CD4-positive, alpha-beta T cell (primary cell): ENCODE measurements at regions of chr2 and their contacts with region 1.

Region 1: DNA sequence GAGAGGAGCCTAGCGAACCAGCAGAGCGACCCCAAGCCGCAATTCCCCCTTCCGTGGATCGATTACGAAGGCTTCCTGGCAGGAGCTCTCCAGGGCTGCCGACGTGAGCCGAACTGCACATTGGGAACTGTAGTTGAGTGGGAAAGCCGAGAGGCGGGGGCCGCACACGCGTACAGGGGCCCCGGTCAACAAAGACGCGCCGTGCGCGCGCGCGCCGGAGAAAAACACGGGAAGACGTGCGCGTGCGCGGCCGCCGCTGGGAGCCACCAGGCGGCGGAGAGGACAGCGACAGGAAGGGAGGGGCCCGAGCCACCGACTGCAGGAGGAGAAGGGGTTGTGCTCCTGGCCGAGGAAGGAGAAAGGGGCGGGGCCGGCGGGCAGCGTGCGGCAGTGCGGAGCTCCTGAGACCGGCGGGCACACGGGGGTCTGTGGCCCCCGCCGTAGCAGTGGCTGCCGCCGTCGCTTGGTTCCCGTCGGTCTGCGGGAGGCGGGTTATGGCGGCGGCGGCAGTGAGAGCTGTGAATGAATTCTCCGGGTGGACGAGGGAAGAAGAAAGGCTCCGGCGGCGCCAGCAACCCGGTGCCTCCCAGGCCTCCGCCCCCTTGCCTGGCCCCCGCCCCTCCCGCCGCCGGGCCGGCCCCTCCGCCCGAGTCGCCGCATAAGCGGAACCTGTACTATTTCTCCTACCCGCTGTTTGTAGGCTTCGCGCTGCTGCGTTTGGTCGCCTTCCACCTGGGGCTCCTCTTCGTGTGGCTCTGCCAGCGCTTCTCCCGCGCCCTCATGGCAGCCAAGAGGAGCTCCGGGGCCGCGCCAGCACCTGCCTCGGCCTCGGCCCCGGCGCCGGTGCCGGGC is at the start of gene SPAST:
- DNase-seq: peak; percentile 91 to 98 (median 96)
- ATAC-seq: peak; percentile 87
- H3K4me3 ChIP-seq: peak within 1 kb of the TSS; percentile 90
- H3K4me3 Mint-ChIP-seq: peak within 1 kb of the TSS; percentile 97
- H3K27ac ChIP-seq: peak within 1 kb of the TSS; percentile 66 to 80
- H3K27ac Mint-ChIP-seq: peak within 1 kb of the TSS; percentile 90
- H3K4me1 ChIP-seq: peaks cover 35% of the 10 kb centered on the region
- H3K4me1 Mint-ChIP-seq: peaks cover 39% of the 10 kb centered on the region
- H3K27me3 ChIP-seq: no peaks in the 10 kb centered on the region
- H3K27me3 Mint-ChIP-seq: no peaks in the 10 kb centered on the region
- CTCF ChIP-seq: peak; percentile 64
- total RNA-seq, gene SPAST: 7.0 to 7.4 TPM

Region 2: GRCh38 chr2:31233741-31234682 is 829.5 kb before region 1 on chr2 and contains the start of gene EHD3:
- CTCF ChIA-PET with region 1: no interaction called
- POLR2A ChIA-PET with region 1: no interaction called
- intact Hi-C with region 1: loop called in 1 of 2 experiments (anchors 10 kb)
- DNase-seq: peak; percentile 51 to 85 (median 71)
- ATAC-seq: peak; percentile 97
- H3K4me3 ChIP-seq: peak within 1 kb of the TSS; percentile 73
- H3K4me3 Mint-ChIP-seq: peak within 1 kb of the TSS; percentile 86
- H3K27ac ChIP-seq: no peak within 1 kb of the TSS
- H3K27ac Mint-ChIP-seq: peak within 1 kb of the TSS; percentile 78
- H3K4me1 ChIP-seq: peaks cover 20% of the 10 kb centered on the region
- H3K4me1 Mint-ChIP-seq: peaks cover 31% of the 10 kb centered on the region
- H3K27me3 ChIP-seq: no peaks in the 10 kb centered on the region
- H3K27me3 Mint-ChIP-seq: peaks cover 9% of the 10 kb centered on the region
- CTCF ChIP-seq: no peak
- total RNA-seq, gene EHD3: 1.4 to 1.7 TPM

Region 3: DNA sequence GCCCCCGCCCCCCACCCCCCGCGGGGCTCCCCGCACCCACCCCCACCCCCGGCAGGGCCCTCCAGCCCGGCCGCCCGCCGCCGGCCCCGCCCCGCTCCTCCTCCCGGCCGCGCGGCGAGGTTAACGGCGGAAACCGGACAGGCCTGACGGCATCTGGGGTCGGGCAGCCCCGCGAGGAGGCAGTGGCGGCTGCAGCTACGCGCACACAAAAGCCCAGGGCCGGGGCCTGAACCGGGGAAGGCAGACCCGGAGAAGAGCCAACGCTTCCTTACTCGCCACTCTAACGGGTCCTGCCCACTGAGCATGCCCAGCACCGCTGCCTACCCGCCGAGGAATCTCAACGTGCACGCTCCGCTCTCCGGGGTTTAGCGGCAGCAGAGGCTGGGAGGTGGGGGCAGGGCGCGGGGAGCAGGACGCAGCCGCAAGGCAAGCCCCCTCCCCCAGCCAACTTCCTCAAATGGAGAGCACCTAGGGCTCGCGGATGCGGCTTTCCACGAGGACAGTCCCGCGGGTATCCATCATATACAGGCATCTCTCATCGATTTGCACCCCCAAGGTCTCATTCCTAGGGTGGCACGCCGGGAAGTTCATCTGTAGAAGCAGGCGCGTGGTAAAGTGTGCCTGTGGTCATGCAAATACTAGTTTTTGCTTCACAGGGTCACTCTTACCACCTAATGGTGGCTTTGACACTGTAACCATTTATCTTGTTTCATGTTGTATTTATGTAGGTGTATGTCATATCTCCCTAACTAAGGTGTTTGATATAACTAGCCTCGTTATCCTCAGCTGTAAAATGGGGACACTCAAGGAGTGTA is 52.7 kb before region 1 on chr2 and contains the start of gene MEMO1:
- CTCF ChIA-PET with region 1: interaction called, 3 read pairs
- POLR2A ChIA-PET with region 1: interaction called, 25 read pairs
- intact Hi-C with region 1: loop called (anchors 1 to 2 kb)
- DNase-seq: peak; percentile 82 to 96 (median 91)
- ATAC-seq: peak; percentile 83
- H3K4me3 ChIP-seq: peak within 1 kb of the TSS; percentile 80
- H3K4me3 Mint-ChIP-seq: peak within 1 kb of the TSS; percentile 89
- H3K27ac ChIP-seq: peak within 1 kb of the TSS; percentile 69 to 74
- H3K27ac Mint-ChIP-seq: peak within 1 kb of the TSS; percentile 91
- H3K4me1 ChIP-seq: peaks cover 32% of the 10 kb centered on the region
- H3K4me1 Mint-ChIP-seq: peaks cover 53% of the 10 kb centered on the region
- H3K27me3 ChIP-seq: no peaks in the 10 kb centered on the region
- H3K27me3 Mint-ChIP-seq: no peaks in the 10 kb centered on the region
- CTCF ChIP-seq: no peak
- total RNA-seq, gene MEMO1: 39.6 to 39.8 TPM

Region 4: GRCh38 chr2:32168513-32168912 is 105.0 kb after region 1 on chr2:
- CTCF ChIA-PET with region 1: no interaction called
- POLR2A ChIA-PET with region 1: interaction called, 15 read pairs
- intact Hi-C with region 1: loop called (anchors 1 kb)
- DNase-seq: no peak
- ATAC-seq: no peak
- H3K4me3 ChIP-seq: no peak overlapping the region
- H3K4me3 Mint-ChIP-seq: peak overlapping the region; percentile 1
- H3K27ac ChIP-seq: no peak overlapping the region
- H3K27ac Mint-ChIP-seq: no peak overlapping the region
- H3K4me1 ChIP-seq: peaks cover 4% of the 10 kb centered on the region
- H3K4me1 Mint-ChIP-seq: peaks cover 56% of the 10 kb centered on the region
- H3K27me3 ChIP-seq: no peaks in the 10 kb centered on the region
- H3K27me3 Mint-ChIP-seq: no peaks in the 10 kb centered on the region
- CTCF ChIP-seq: no peak

Region 5: GRCh38 chr2:32356735-32357644 is 293.5 kb after region 1 on chr2 and contains the start of gene BIRC6:
- CTCF ChIA-PET with region 1: no interaction called
- POLR2A ChIA-PET with region 1: interaction called, 4 read pairs
- intact Hi-C with region 1: loop called in 1 of 2 experiments (anchors 5 kb)
- DNase-seq: peak; percentile 71 to 96 (median 89)
- ATAC-seq: peak; percentile 89
- H3K4me3 ChIP-seq: peak within 1 kb of the TSS; percentile 97
- H3K4me3 Mint-ChIP-seq: peak within 1 kb of the TSS; percentile 98
- H3K27ac ChIP-seq: peak within 1 kb of the TSS; percentile 75 to 87
- H3K27ac Mint-ChIP-seq: peak within 1 kb of the TSS; percentile 81
- H3K4me1 ChIP-seq: peaks cover 23% of the 10 kb centered on the region
- H3K4me1 Mint-ChIP-seq: peaks cover 44% of the 10 kb centered on the region
- H3K27me3 ChIP-seq: no peaks in the 10 kb centered on the region
- H3K27me3 Mint-ChIP-seq: no peaks in the 10 kb centered on the region
- CTCF ChIP-seq: no peak
- total RNA-seq, gene BIRC6: 110 to 113 TPM

Region 6: GRCh38 chr2:33599175-33599942 is 1535.8 kb after region 1 on chr2 and contains the start of gene FAM98A:
- CTCF ChIA-PET with region 1: no interaction called
- POLR2A ChIA-PET with region 1: no interaction called
- intact Hi-C with region 1: loop called in 1 of 2 experiments (anchors 10 kb)
- DNase-seq: peak; percentile 97 to 100 (median 99)
- ATAC-seq: peak; percentile 91
- H3K4me3 ChIP-seq: peak within 1 kb of the TSS; percentile 95
- H3K4me3 Mint-ChIP-seq: peak within 1 kb of the TSS; percentile 96
- H3K27ac ChIP-seq: peak within 1 kb of the TSS; percentile 77 to 86
- H3K27ac Mint-ChIP-seq: peak within 1 kb of the TSS; percentile 92
- H3K4me1 ChIP-seq: peaks cover 16% of the 10 kb centered on the region
- H3K4me1 Mint-ChIP-seq: peaks cover 46% of the 10 kb centered on the region
- H3K27me3 ChIP-seq: no peaks in the 10 kb centered on the region
- H3K27me3 Mint-ChIP-seq: no peaks in the 10 kb centered on the region
- CTCF ChIP-seq: no peak
- total RNA-seq, gene FAM98A: 20.1 to 21.6 TPM